GM12878 (cell line): ENCODE measurements at regions of chr12 and their contacts with region 1.

Region 1: DNA sequence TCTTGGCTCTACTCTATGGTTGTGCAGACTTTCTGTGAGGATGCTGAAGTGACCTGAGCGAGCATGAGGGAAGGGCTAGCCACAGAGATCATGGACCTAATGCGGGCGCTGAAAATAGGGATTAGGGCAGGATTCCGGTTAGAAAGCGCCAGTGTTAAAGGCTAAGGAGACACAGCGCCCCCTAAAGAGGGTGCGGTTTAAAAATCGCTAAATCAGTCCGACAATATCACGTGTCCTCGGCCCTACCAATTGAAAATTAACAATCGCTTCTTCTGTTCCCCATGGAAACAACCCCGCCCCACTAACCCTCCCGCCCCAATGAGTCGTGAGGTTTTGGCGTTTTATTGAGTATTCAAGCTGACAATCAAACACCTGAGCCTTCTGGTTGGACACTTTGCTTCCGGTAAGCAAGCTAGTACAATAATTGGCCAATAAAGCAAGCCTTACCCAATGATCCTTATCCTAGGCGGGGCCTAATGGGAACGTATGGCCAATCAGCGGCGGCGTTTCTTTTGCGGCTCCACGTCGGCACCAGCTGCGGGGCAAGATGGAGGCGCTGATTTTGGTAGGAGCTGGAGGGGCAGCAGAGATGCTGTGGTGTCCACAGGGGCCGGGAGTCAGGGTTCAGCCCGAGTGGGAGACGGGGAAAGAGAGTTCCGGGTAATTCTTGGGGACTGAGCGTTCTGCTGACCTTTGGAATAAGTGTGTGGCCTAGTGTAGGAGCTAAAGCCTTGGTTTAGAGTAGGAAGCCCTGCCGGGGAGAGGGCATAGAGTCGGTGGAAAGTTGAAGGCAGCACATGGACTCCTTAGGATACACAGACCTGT is at the start of gene COPZ1:
- DNase-seq: peak; percentile 99
- ATAC-seq: peak; percentile 99
- H3K4me3 ChIP-seq: peak within 1 kb of the TSS; percentile 98
- H3K27ac ChIP-seq: peak within 1 kb of the TSS; percentile 84
- H3K4me1 ChIP-seq: no peaks in the 10 kb centered on the region; the same call in 1 of the 2 replicates
- H3K27me3 ChIP-seq: no peaks in the 10 kb centered on the region
- CTCF ChIP-seq: peak; percentile 73 to 88 (median 77)
- EP300 ChIP-seq: no peak
- POLR2A ChIP-seq: peak; percentile 91
- RAD21 ChIP-seq: peak; percentile 52; the same call in 1 of the 2 replicates
- polyA plus RNA-seq, gene COPZ1: 260 to 378 TPM

Region 2: GRCh38 chr12:54229624-54230212 is 95.1 kb before region 1 on chr12:
- CTCF ChIA-PET with region 1: interaction called, 11 read pairs
- POLR2A ChIA-PET with region 1: interaction called, 3 read pairs
- RAD21 ChIA-PET with region 1: interaction called, 4 read pairs
- SMC1A ChIA-PET with region 1: interaction called, 4 read pairs
- in situ Hi-C with region 1: no loop called
- intact Hi-C with region 1: no loop called
- DNase-seq: no peak
- ATAC-seq: peak; percentile 81
- H3K4me3 ChIP-seq: no peak overlapping the region
- H3K27ac ChIP-seq: no peak overlapping the region
- H3K4me1 ChIP-seq: peaks cover 5% of the 10 kb centered on the region; the same call in 1 of the 2 replicates
- H3K27me3 ChIP-seq: no peaks in the 10 kb centered on the region
- CTCF ChIP-seq: no peak
- EP300 ChIP-seq: no peak
- POLR2A ChIP-seq: no peak
- RAD21 ChIP-seq: no peak

Region 3: DNA sequence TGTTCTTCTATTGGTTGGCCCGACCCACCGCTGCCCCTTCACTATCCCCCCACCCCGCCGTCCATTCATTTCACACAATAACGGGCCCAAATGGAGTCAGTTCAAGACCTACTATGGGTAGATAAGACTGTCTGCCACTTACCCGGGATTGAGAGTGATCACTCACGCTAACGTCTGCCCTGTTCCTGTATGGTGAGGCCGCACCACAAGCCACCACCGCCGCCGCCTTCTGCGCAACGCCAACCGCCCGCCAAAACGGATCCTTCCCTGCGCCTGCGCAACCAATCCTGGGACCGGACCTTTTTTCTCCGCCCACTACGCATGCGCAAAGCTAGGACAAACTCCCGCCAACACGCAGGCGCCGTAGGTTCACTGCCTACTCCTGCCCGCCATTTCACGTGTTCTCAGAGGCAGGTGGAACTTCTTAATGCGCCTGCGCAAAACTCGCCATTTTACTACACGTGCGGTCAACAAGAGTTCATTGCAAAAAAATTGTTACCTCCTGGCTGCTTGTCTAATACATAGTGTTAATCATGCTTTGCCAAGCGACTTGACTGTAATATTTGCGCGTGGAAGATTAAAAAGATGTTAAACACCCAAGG is 44.9 kb before region 1 on chr12 and contains the start of gene CBX5:
- CTCF ChIA-PET with region 1: interaction called, 22 read pairs
- POLR2A ChIA-PET with region 1: interaction called, 31 read pairs
- RAD21 ChIA-PET with region 1: interaction called, 24 read pairs
- SMC1A ChIA-PET with region 1: interaction called, 4 read pairs
- in situ Hi-C with region 1: no loop called
- intact Hi-C with region 1: no loop called
- DNase-seq: peak; percentile 98
- ATAC-seq: peak; percentile 48
- H3K4me3 ChIP-seq: peak within 1 kb of the TSS; percentile 81
- H3K27ac ChIP-seq: peak within 1 kb of the TSS; percentile 99
- H3K4me1 ChIP-seq: peaks cover 18% of the 10 kb centered on the region
- H3K27me3 ChIP-seq: no peaks in the 10 kb centered on the region
- CTCF ChIP-seq: no peak
- EP300 ChIP-seq: no peak
- POLR2A ChIP-seq: peak; percentile 83
- RAD21 ChIP-seq: no peak
- polyA plus RNA-seq, gene CBX5: 66.9 to 67.1 TPM

Region 4: DNA sequence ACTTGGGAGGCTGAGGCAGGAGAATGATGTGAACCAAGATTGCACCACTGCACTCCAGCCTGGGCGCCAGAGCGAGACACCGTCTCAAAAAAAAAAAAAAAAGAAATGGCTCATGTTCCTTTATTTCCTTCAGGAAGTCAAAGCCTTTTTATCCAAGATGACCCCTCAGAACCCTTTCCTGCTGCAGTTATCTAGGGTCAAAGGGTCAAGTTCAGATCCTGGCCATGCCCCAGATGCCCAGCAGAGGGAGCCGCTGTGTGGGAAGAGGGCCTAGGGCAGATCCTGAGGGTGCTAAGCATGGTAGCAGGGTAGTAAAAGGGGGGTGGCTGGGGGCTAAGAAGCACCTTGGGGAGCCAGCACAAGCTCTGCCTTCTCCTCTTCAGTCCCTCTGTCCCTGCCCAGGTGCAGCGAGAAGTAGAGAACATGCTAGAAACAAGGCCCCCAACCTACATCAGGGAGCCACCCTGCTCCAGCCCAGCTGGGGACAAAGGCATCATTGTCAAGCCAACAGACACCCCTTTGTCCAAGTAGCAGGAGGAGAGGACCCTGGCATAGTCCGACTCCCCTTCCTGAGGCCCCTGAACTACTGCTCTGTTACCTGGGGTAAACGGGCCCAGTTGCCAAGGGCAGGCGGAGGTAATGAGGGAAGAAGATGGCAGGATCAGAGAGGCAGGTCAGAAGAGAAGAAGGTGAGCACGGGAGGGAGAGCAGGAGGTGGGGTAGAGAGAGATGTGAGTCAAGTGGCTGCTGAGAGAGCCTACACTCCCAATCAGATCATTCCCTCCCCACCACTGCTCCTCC is 30.5 kb before region 1 on chr12:
- CTCF ChIA-PET with region 1: interaction called, 63 read pairs
- POLR2A ChIA-PET with region 1: interaction called, 6 read pairs
- RAD21 ChIA-PET with region 1: interaction called, 14 read pairs
- SMC1A ChIA-PET with region 1: interaction called, 8 read pairs
- in situ Hi-C with region 1: no loop called
- intact Hi-C with region 1: no loop called
- DNase-seq: no peak
- ATAC-seq: peak; percentile 81
- H3K4me3 ChIP-seq: no peak overlapping the region
- H3K27ac ChIP-seq: no peak overlapping the region
- H3K4me1 ChIP-seq: no peaks in the 10 kb centered on the region
- H3K27me3 ChIP-seq: peaks cover 0 to 4% of the 10 kb centered on the region in 2 experiments
- CTCF ChIP-seq: peak; percentile 74 to 94 (median 91)
- EP300 ChIP-seq: no peak
- POLR2A ChIP-seq: no peak
- RAD21 ChIP-seq: peak; percentile 86

Region 5: DNA sequence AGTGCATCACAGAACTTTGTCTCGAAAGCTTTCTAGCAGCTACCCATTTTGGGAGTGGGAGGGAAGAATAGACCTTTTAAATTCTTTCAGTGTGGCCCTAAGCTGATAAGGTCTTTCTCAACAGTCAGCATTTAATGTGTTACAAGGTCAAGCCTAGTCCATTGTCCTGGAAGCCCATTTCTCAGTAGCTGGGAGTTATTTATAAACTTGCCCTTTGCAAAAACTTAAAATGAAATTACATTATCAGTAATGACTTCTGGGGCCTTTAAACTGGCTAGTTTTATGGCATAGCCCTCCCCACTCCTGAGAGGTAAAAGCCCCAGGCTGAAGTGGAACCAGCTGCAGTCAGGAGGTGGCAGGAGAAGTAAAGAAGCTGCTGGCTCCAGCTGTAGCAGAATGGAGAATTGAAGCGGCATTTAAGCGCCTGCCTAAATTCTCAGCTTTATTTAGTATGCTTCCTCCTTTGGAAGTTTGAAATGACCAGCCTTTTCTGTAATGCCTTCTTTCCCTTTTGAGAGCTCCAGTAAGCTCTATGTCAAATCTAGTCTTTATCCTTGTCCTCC is 12.5 kb after region 1 on chr12:
- CTCF ChIA-PET with region 1: interaction called, 80 read pairs
- POLR2A ChIA-PET with region 1: interaction called, 16 read pairs
- RAD21 ChIA-PET with region 1: interaction called, 17 read pairs
- SMC1A ChIA-PET with region 1: interaction called, 11 read pairs
- in situ Hi-C with region 1: no loop called
- intact Hi-C with region 1: no loop called
- DNase-seq: no peak
- ATAC-seq: no peak
- H3K4me3 ChIP-seq: no peak overlapping the region
- H3K27ac ChIP-seq: no peak overlapping the region
- H3K4me1 ChIP-seq: no peaks in the 10 kb centered on the region
- H3K27me3 ChIP-seq: no peaks in the 10 kb centered on the region
- CTCF ChIP-seq: 0 out of 6 replicates have a peak, but pooled peaks of 1 of the 3 experiments have one; percentile 5
- EP300 ChIP-seq: no peak
- POLR2A ChIP-seq: no peak
- RAD21 ChIP-seq: 0 out of 2 replicates have a peak, but pooled peaks have one; percentile 16

Region 6: DNA sequence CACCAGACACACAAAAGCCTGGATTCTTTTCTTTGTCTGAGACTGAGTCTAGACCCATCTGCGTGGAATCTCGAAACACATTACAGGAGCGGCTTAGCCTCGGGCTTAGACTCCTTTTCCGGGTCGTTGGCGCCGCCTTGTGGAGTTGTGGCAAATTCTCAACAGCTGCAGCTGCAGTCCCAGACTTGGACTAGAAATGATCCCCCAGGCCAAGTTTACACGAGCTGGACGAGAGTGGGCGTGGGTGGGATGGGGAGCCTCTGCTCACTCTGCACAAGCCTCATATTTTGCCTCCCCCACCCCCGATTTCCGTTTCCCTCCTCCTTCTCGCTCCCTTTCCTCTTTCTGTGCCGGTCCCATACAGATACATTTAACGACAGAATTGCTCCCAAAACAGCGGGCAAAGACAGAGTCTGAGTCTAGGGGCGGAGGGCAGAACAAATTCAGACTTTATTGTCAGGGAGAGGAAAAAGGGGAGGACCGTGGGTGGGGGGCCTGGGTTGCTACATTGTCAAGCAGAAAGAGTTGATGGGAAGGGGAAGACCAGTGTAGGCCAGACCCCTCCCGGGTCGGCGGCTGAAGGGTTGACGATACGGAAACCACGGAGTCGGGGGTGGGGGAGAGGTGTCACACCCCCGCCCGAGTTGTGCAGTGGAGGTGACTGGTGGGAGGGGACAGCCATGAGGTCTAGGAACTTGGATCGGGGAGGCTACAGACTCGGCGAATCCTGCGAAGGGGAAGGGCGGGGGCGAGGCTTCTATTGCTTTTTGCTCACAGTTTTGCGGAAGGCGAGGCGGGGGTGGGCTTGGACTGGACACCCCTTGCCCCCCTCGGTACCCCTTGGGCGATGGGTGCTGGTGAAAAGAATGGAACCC is 44.1 kb after region 1 on chr12:
- CTCF ChIA-PET with region 1: interaction called, 20 read pairs
- POLR2A ChIA-PET with region 1: interaction called, 4 read pairs
- RAD21 ChIA-PET with region 1: interaction called, 5 read pairs
- SMC1A ChIA-PET with region 1: interaction called, 4 read pairs
- in situ Hi-C with region 1: no loop called
- intact Hi-C with region 1: no loop called
- DNase-seq: no peak
- ATAC-seq: peak; percentile 92
- H3K4me3 ChIP-seq: no peak overlapping the region
- H3K27ac ChIP-seq: no peak overlapping the region
- H3K4me1 ChIP-seq: peaks cover 24% of the 10 kb centered on the region
- H3K27me3 ChIP-seq: no peaks in the 10 kb centered on the region
- CTCF ChIP-seq: peak; percentile 91 to 99 (median 98); a peak in 5 of 6 replicates
- EP300 ChIP-seq: no peak
- POLR2A ChIP-seq: no peak
- RAD21 ChIP-seq: peak; percentile 93